ENCODE measurements at regions of chr12 and their contacts with region 1.

Region 1: GRCh38 chr12:44015335-44015941 is 179.6 kb downstream of the TMEM117 start:
- DNase-seq: no peak
- ATAC-seq: no peak
- H3K4me3 ChIP-seq: no peak overlapping the region
- H3K27ac ChIP-seq: no peak overlapping the region
- H3K4me1 ChIP-seq: no peaks in the 10 kb centered on the region
- H3K27me3 ChIP-seq: no peaks in the 10 kb centered on the region

Region 2: DNA sequence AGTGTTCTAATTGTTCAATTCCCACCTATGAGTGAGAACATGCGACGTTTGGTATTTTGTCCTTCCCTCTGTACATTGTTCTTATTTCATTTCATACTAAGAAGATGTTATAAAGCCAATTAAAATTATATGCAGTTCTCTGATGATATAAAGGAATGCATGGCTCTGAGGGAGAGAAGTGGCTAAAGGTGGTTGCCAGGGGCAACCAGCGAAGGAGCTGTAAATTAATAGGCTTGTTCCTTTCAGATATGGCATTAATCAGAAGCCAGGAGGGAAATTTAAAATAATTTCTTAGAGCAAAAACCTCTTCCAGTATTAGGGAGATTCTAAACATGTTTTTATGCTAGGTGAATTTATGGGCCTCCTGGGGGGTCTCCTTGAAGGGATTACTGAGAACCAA is 48.2 kb after region 1 on chr12:
- intact Hi-C with region 1: loop called in 1 of 2 experiments (anchors 5 kb)
- DNase-seq: no peak
- ATAC-seq: no peak
- H3K4me3 ChIP-seq: no peak overlapping the region
- H3K27ac ChIP-seq: no peak overlapping the region
- H3K4me1 ChIP-seq: peaks cover 0 to 1% of the 10 kb centered on the region in 2 donors
- H3K27me3 ChIP-seq: no peaks in the 10 kb centered on the region

Region 3: GRCh38 chr12:44076871-44077270 is 61.4 kb after region 1 on chr12:
- intact Hi-C with region 1: no loop called
- DNase-seq: no peak
- ATAC-seq: no peak
- H3K4me3 ChIP-seq: no peak overlapping the region
- H3K27ac ChIP-seq: peak overlapping the region in 1 of 2 donors; percentile 19
- H3K4me1 ChIP-seq: peaks cover 0 to 6% of the 10 kb centered on the region in 2 donors
- H3K27me3 ChIP-seq: no peaks in the 10 kb centered on the region

Region 4: GRCh38 chr12:44930972-44931600 is 915.6 kb after region 1 on chr12:
- intact Hi-C with region 1: loop called (anchors 5 kb)
- DNase-seq: no peak
- ATAC-seq: no peak
- H3K4me3 ChIP-seq: no peak overlapping the region
- H3K27ac ChIP-seq: no peak overlapping the region
- H3K4me1 ChIP-seq: no peaks in the 10 kb centered on the region
- H3K27me3 ChIP-seq: no peaks in the 10 kb centered on the region